Calu3 (cell line): ENCODE measurements at regions of chrX and their contacts with region 1.

Region 1: DNA sequence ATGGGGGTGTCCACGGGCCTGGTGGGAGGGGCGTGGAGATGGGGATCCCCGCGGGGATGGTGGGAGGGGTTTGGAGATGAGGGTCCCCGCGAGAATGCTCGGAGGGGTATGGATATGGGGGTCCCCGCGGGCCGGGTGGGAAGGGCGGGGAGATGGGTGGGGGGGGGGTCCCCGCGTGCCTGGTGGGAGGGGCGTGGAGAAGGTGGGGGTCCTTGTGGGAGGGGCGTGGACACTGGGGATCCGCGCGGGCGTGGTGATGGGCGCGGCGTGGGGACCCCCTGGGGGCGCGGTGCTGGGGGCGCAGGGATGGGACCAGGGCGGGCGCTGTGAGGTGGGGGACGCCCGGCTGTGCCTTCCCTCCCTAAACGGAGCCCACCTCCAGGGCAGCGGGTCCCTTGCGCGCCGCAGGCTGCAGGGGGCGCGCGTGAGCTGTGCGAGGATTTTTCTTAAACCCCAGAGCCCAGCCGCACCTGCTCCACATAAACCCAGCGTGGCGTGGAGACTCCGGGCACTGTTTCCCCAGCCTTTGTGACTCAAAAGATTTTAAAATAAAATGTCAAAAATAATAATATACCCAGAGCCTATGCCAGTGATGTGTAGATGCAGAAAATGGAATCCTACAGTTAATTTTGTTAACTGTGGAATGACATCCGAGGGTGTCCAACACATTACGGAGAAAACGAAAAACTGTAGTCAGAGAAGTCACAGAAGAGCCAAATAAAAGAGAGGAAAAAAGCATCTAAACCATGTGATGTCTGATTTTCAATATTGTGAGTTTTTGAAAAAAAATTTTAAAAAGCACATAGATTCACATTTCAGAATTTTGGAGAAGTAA is 1.5 kb upstream of the ASMTL start:
- DNase-seq: peak; percentile 86
- H3K4me3 Mint-ChIP-seq: no peak overlapping the region
- H3K27ac Mint-ChIP-seq: no peak overlapping the region
- H3K4me1 Mint-ChIP-seq: no peaks in the 10 kb centered on the region
- H3K27me3 Mint-ChIP-seq: peaks cover 12% of the 10 kb centered on the region
- CTCF ChIP-seq: peak; percentile 89

Region 2: DNA sequence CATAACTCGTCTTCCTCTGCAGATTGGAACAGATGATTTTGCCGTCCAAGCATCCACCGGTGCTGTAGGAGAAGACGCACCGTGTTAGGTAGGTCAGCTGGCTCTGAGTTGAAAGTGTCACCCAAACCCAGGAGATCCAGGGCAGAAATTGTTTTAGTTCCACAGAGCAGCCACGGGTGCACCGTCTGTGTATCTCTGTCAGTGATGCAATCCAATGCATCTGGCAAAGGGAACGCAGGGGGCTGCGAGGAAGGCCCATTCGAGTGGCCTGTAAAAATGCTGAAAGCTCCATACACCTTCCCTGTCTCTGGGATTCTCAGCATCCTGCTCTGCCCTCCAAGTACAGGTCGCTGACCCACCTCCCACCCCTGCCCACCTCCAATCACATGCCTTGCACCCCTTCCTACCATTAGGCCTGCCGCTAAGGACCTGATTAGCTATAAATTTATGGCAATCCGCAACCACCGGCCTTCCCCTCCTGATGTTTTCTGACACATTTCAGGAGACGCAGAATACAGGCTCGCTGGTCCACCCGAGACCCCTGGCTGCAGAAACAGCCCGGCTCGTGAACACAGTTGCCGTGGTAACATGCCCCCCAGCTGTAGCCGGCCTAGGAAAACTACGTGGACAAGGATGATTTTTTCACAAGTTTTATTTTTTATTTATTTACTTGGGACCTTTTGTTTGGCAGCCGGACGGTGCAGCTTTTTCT is 863.3 kb before region 1 on chrX:
- CTCF ChIA-PET with region 1: no interaction called
- intact Hi-C with region 1: no loop called
- DNase-seq: no peak
- H3K4me3 Mint-ChIP-seq: no peak overlapping the region
- H3K27ac Mint-ChIP-seq: no peak overlapping the region
- H3K4me1 Mint-ChIP-seq: no peaks in the 10 kb centered on the region
- H3K27me3 Mint-ChIP-seq: no peaks in the 10 kb centered on the region
- CTCF ChIP-seq: no peak

Region 3: DNA sequence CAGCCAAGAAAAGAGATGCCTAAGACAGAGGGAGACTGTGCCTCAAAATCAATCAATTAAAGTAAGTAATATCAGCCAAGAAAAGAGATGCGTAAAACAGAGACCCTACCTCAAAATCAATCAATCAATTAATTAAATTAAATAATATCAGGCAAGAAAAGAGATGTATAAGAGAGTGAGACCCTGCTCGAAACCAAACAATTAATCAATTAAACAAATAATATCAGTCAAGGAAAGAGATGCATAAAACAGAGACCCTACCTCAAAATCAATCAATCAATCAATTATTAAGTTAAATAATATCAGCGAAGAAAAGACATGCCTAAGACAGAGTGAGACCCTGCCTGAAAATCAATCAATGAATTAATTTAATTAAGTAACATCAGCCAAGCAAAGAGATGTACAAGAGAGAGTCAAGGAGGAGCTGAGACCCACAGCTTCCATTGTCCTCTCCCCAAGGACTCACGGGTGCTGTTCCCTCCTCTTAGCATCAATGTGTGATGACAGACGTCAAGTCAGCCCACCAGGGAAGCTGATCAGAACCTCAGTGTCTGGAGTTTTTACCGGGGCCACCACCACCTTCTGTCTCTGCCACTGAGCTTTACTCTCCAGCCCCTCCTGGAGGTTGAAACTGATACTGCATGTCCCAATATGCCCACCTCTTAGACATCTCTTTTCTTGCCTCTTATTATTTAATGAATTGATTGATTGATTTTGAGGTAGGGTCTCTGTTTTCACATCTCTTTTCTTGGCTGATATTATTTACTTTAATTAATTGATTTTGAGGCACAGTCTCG is 126.8 kb after region 1 on chrX:
- CTCF ChIA-PET with region 1: no interaction called
- intact Hi-C with region 1: loop called (anchors 5 kb)
- DNase-seq: peak; percentile 55
- H3K4me3 Mint-ChIP-seq: no peak overlapping the region
- H3K27ac Mint-ChIP-seq: no peak overlapping the region
- H3K4me1 Mint-ChIP-seq: peaks cover 15% of the 10 kb centered on the region
- H3K27me3 Mint-ChIP-seq: no peaks in the 10 kb centered on the region
- CTCF ChIP-seq: peak; percentile 65

Region 4: GRCh38 chrX:2819345-2820135 is 1365.4 kb after region 1 on chrX:
- CTCF ChIA-PET with region 1: no interaction called
- intact Hi-C with region 1: loop called (anchors 10 kb)
- DNase-seq: peak; percentile 20
- H3K4me3 Mint-ChIP-seq: no peak overlapping the region
- H3K27ac Mint-ChIP-seq: no peak overlapping the region
- H3K4me1 Mint-ChIP-seq: no peaks in the 10 kb centered on the region
- H3K27me3 Mint-ChIP-seq: no peaks in the 10 kb centered on the region
- CTCF ChIP-seq: no peak